ENCODE measurements at regions of chr18 and their contacts with region 1.

Region 1: GRCh38 chr18:54958657-54959625 is at the start of gene CCDC68:
- DNase-seq: no peak
- ATAC-seq: no peak
- H3K4me3 ChIP-seq: peak within 1 kb of the TSS; percentile 32 to 50 (median 44)
- H3K27ac ChIP-seq: peak within 1 kb of the TSS in 3 of 4 donors; percentile 39 to 58 (median 46)
- H3K4me1 ChIP-seq: no peaks in the 10 kb centered on the region
- H3K27me3 ChIP-seq: peaks cover 0 to 12% (median 9%) of the 10 kb centered on the region in 3 donors
- CTCF ChIP-seq: no peak
- POLR2A ChIP-seq: peak in 1 of 2 donors; percentile 20
- total RNA-seq, gene CCDC68: 2.4 to 6.0 (median 4.5) TPM

Region 2: GRCh38 chr18:54852780-54853675 is 105.9 kb before region 1 on chr18:
- in situ Hi-C with region 1: loop called in 1 of 4 experiments (anchors 25 kb)
- intact Hi-C with region 1: no loop called
- DNase-seq: no peak
- ATAC-seq: no peak
- H3K4me3 ChIP-seq: no peak overlapping the region
- H3K27ac ChIP-seq: no peak overlapping the region
- H3K4me1 ChIP-seq: no peaks in the 10 kb centered on the region
- H3K27me3 ChIP-seq: no peaks in the 10 kb centered on the region
- CTCF ChIP-seq: no peak
- POLR2A ChIP-seq: no peak

Region 3: GRCh38 chr18:54888933-54889332 is 70.0 kb before region 1 on chr18:
- in situ Hi-C with region 1: no loop called
- intact Hi-C with region 1: no loop called
- DNase-seq: no peak
- ATAC-seq: no peak
- H3K4me3 ChIP-seq: no peak overlapping the region
- H3K27ac ChIP-seq: no peak overlapping the region
- H3K4me1 ChIP-seq: no peaks in the 10 kb centered on the region
- H3K27me3 ChIP-seq: no peaks in the 10 kb centered on the region
- CTCF ChIP-seq: no peak
- POLR2A ChIP-seq: no peak

Region 4: DNA sequence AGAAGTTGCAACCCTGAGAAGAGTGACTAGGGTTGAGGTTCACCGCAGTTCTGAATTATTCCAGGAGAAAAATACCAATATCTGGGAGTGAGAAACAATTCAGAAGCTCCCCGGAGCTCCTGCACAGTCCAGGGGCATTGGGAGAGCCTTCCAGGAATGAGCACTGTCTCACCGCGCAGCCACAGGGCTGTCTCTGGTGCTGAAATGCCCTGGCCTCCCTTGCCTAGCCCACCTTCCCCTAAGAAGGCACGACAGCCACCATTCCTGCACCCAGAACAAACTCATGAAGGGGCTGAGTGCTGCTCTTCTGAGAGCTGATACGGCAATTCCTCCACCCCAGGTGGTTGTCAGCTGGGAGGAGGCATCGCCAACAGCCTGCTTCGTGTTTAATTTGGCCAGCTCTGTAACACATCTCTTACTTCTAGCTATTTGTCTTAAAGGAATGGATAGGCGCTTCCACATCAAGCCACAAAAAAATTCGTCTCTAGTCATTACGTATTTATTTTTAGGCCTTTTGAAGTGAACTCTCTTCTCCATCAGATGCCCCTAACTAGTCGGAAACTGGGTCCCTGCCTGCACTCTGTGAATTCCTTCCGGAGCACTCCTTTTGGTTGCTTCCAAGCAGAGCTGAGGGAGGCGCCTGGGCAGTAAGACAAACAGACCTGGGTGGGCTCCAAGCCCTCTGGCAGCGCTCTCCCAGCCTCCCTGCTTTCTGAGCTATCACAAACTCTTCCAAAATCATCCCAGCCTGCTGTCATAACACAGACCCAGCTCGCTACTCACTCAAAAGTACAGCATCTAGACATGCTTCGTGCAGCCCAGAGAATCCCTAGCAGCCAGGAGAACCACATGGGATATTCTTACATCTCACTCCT is 120.8 kb after region 1 on chr18:
- in situ Hi-C with region 1: no loop called
- intact Hi-C with region 1: no loop called
- DNase-seq: no peak
- ATAC-seq: no peak
- H3K4me3 ChIP-seq: no peak overlapping the region
- H3K27ac ChIP-seq: no peak overlapping the region
- H3K4me1 ChIP-seq: no peaks in the 10 kb centered on the region
- H3K27me3 ChIP-seq: no peaks in the 10 kb centered on the region
- CTCF ChIP-seq: no peak
- POLR2A ChIP-seq: no peak

Region 5: DNA sequence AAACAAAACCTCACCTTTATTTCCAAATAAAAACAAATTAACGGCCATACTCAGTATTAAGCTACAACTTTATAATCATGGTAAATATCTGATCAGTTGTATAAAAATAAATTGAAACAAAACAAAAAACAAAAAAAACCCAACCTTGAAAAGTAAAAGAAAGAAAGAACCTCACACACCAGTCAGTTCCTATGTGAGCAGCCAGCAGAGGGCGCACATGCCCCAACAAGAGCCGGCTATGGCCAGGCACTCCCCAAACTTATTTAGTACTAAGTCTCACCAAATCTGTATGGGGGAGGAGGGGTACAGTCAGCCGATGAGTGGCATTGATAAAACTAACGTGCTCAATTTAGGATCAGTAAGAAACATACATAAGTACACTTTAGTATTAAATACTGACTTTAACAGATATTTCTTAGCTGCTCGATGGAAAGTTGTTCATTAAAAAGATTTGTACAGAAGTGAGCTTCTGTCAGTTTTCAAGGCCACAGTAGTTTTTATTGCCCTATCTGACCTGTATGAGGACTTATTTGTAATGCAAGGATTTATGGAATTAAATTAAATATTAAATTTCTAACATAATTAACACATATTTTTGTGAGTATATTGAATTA is 456.4 kb after region 1 on chr18:
- in situ Hi-C with region 1: no loop called
- intact Hi-C with region 1: no loop called
- DNase-seq: peak; percentile 73 to 80
- ATAC-seq: peak; percentile 77 to 81
- H3K4me3 ChIP-seq: no peak overlapping the region
- H3K27ac ChIP-seq: peak overlapping the region; percentile 11 to 92 (median 89)
- H3K4me1 ChIP-seq: peaks cover 60 to 69% of the 10 kb centered on the region in 2 donors
- H3K27me3 ChIP-seq: no peaks in the 10 kb centered on the region
- CTCF ChIP-seq: peak; percentile 77 to 95 (median 87)
- POLR2A ChIP-seq: no peak